ENCODE measurements at regions of chr7 and their contacts with region 1.

Region 1: DNA sequence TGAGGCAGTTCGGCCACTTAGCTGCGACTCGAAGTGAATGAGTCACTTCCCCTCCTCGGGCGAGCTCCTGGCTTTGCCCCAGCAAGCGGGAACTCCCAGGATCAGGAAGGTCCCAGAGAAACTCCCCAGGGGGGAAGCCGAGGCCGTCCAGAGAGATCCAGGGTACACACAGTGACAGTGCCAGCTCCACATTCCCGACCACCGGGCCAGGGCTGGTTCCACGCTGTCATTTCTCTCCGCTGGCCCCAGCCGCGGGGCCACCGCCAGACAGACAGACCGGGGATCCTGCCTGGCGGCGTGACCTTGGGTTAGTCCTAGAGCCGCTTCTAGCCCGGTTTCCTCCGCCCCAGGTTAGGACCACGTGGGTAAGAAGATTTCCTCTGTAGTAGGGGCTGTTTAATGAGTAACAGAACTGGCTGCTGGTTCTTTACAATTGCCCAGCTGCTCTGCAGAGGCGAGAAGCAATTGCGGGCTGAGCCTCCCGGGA is 463 bp upstream of the UPP1 start:
- DNase-seq: peak in 1 of 2 donors; percentile 83
- ATAC-seq: peak; percentile 15 to 72 (median 64)
- H3K4me3 ChIP-seq: peak overlapping the region; percentile 59
- H3K4me3 Mint-ChIP-seq: peak overlapping the region; percentile 95
- H3K27ac ChIP-seq: peak overlapping the region; percentile 95
- H3K27ac Mint-ChIP-seq: peak overlapping the region; percentile 96 to 98
- H3K4me1 ChIP-seq: peaks cover 75% of the 10 kb centered on the region
- H3K4me1 Mint-ChIP-seq: peaks cover 74 to 92% of the 10 kb centered on the region in 2 donors
- H3K27me3 ChIP-seq: no peaks in the 10 kb centered on the region
- H3K27me3 Mint-ChIP-seq: no peaks in the 10 kb centered on the region
- CTCF ChIP-seq: no peak

Region 2: DNA sequence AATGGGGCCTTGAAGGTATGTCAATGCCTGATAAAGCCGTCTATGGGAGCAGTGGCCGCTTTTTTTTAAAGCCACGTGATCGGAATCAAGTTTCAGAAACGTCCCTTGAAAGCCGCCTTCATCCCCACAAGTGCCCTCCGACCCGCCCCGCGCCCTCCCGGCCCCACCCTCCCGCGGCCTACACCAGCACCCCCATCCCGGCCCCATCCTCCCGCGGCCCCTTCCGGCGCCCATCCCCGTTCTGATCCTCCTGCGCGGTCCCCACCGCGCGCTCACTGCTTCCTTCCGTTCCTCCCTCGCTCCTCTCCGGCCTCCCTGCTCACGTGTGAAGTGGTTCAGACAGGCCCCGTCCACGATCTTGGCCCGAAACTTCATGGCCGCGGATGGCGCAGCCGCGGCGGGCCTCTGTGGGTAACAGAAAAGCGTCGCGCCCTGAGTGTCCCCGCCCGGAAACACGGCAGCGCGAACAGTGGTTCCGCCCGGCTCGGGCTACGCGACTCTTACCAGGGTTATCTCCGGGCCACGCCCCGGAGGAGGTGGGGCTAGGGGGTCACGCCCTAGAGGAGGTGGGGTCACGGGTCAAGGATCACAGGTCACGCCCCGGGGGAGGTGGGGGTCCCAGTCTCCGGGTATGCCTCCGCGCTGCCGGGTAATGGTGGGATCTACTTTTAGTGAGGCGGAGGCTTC is 109.3 kb before region 1 on chr7 and contains the start of gene HUS1:
- intact Hi-C with region 1: loop called (anchors 5 kb)
- DNase-seq: peak; percentile 85 to 95
- ATAC-seq: peak; percentile 96 to 100 (median 97)
- H3K4me3 ChIP-seq: peak within 1 kb of the TSS; percentile 58
- H3K4me3 Mint-ChIP-seq: peak within 1 kb of the TSS; percentile 98
- H3K27ac ChIP-seq: peak within 1 kb of the TSS; percentile 85
- H3K27ac Mint-ChIP-seq: peak within 1 kb of the TSS; percentile 95 to 97
- H3K4me1 ChIP-seq: peaks cover 6% of the 10 kb centered on the region
- H3K4me1 Mint-ChIP-seq: peaks cover 32 to 33% of the 10 kb centered on the region in 2 donors
- H3K27me3 ChIP-seq: no peaks in the 10 kb centered on the region
- H3K27me3 Mint-ChIP-seq: no peaks in the 10 kb centered on the region
- CTCF ChIP-seq: no peak
- total RNA-seq, gene HUS1: 55.6 to 75.0 (median 59.3) TPM

Region 3: GRCh38 chr7:47991741-47992311 is 96.8 kb before region 1 on chr7:
- intact Hi-C with region 1: loop called (anchors 5 kb)
- DNase-seq: peak; percentile 77 to 89
- ATAC-seq: peak; percentile 98 to 99 (median 99)
- H3K4me3 ChIP-seq: peak overlapping the region; percentile 54
- H3K4me3 Mint-ChIP-seq: peak overlapping the region; percentile 98
- H3K27ac ChIP-seq: peak overlapping the region; percentile 72
- H3K27ac Mint-ChIP-seq: peak overlapping the region; percentile 95 to 97
- H3K4me1 ChIP-seq: peaks cover 13% of the 10 kb centered on the region
- H3K4me1 Mint-ChIP-seq: peaks cover 16 to 27% of the 10 kb centered on the region in 2 donors
- H3K27me3 ChIP-seq: no peaks in the 10 kb centered on the region
- H3K27me3 Mint-ChIP-seq: no peaks in the 10 kb centered on the region
- CTCF ChIP-seq: peak; percentile 69

Region 4: DNA sequence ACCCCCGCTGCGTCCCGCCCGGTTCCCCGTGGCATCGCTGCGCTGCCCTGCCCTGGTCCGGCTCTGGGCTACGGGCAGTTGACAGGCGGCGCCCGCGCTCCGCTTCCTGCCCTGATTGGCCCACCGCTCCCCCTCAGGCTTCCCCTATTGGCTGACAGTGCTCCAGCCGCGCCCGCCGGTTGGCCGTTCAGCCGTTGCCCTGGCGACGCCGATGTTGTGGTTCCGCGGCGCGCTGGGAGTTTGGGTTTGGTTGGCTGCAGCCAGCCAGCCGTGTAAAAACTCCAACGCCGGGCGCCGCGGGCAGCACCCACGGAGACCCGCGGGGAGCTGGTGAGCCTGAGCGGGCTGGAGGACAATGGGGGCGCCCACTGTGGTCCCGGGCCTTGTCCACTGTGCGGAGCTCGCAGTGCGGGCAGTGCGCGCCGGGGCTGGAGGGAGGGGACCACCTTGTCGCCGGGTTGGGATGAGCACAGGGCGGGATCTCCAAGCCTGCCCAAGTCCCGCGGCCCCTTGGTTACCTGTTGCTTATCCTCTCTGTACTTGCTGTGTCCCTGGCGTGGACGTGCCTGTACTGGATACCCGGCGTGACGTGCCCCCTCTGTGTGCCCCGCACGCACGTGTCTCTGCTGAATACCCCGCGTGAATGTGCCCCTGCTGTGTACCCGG is 53.2 kb before region 1 on chr7 and contains the start of gene C7orf57:
- intact Hi-C with region 1: loop called (anchors 2 kb)
- DNase-seq: peak; percentile 84 to 89
- ATAC-seq: peak; percentile 91 to 97 (median 95)
- H3K4me3 ChIP-seq: peak within 1 kb of the TSS; percentile 39
- H3K4me3 Mint-ChIP-seq: peak within 1 kb of the TSS; percentile 89
- H3K27ac ChIP-seq: no peak within 1 kb of the TSS
- H3K27ac Mint-ChIP-seq: peak within 1 kb of the TSS; percentile 62 to 83
- H3K4me1 ChIP-seq: peaks cover 13% of the 10 kb centered on the region
- H3K4me1 Mint-ChIP-seq: peaks cover 8 to 12% of the 10 kb centered on the region in 2 donors
- H3K27me3 ChIP-seq: peaks cover 7% of the 10 kb centered on the region
- H3K27me3 Mint-ChIP-seq: peaks cover 22 to 29% of the 10 kb centered on the region in 2 donors
- CTCF ChIP-seq: no peak
- total RNA-seq, gene C7orf57: 0.85 TPM in 1 of 3 donors, not detected in the others

Region 5: DNA sequence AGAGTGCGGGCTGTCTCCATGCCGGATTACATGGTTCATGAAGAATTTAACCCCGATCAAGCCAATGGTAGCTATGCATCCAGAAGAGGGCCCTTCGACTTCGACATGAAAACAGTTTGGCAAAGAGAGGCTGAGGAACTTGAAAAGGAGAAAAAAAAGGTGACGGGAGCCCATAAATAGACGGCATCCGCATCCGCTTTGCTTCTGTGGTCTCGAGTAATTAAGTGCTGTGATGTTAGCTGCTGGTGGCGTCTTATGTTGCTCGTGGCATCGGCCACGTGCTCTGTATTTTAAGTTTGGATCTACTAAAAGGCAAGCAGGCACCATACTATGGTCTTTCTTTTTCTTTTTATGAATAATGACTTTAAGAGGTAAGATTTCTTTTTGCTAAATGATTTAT is 42.1 kb before region 1 on chr7:
- intact Hi-C with region 1: loop called (anchors 2 kb)
- DNase-seq: peak in 1 of 2 donors; percentile 62
- ATAC-seq: peak; percentile 76 to 84 (median 83)
- H3K4me3 ChIP-seq: no peak overlapping the region
- H3K4me3 Mint-ChIP-seq: peak overlapping the region; percentile 70
- H3K27ac ChIP-seq: no peak overlapping the region
- H3K27ac Mint-ChIP-seq: peak overlapping the region; percentile 43 to 79
- H3K4me1 ChIP-seq: peaks cover 29% of the 10 kb centered on the region
- H3K4me1 Mint-ChIP-seq: peaks cover 29 to 56% of the 10 kb centered on the region in 2 donors
- H3K27me3 ChIP-seq: no peaks in the 10 kb centered on the region
- H3K27me3 Mint-ChIP-seq: peaks cover 0 to 6% of the 10 kb centered on the region in 2 donors
- CTCF ChIP-seq: no peak

Measured in natural killer cell (primary cell).